Kidney (tissue), 22 donors: ENCODE measurements at regions of chr11 and their contacts with region 1.

Region 1: GRCh38 chr11:74321487-74322188 is 10.2 kb upstream of the P4HA3 start:
- DNase-seq: peak in 1 of 5 donors; percentile 34
- H3K4me3 ChIP-seq: no peak overlapping the region
- H3K27ac ChIP-seq: no peak overlapping the region
- H3K4me1 ChIP-seq: peaks cover 0 to 2% (median 0%) of the 10 kb centered on the region in 3 donors
- H3K27me3 ChIP-seq: no peaks in the 10 kb centered on the region
- CTCF ChIP-seq: peak; percentile 63

Region 2: GRCh38 chr11:74269161-74269811 is 52.4 kb before region 1 on chr11:
- intact Hi-C with region 1: loop called (anchors 10 kb)
- DNase-seq: no peak
- H3K4me3 ChIP-seq: no peak overlapping the region
- H3K27ac ChIP-seq: no peak overlapping the region
- H3K4me1 ChIP-seq: peaks cover 0 to 4% (median 2%) of the 10 kb centered on the region in 3 donors
- H3K27me3 ChIP-seq: no peaks in the 10 kb centered on the region
- CTCF ChIP-seq: no peak